Transverse colon (tissue), 4 donors: ENCODE measurements at regions of chr13 and their contacts with region 1.

Region 1: DNA sequence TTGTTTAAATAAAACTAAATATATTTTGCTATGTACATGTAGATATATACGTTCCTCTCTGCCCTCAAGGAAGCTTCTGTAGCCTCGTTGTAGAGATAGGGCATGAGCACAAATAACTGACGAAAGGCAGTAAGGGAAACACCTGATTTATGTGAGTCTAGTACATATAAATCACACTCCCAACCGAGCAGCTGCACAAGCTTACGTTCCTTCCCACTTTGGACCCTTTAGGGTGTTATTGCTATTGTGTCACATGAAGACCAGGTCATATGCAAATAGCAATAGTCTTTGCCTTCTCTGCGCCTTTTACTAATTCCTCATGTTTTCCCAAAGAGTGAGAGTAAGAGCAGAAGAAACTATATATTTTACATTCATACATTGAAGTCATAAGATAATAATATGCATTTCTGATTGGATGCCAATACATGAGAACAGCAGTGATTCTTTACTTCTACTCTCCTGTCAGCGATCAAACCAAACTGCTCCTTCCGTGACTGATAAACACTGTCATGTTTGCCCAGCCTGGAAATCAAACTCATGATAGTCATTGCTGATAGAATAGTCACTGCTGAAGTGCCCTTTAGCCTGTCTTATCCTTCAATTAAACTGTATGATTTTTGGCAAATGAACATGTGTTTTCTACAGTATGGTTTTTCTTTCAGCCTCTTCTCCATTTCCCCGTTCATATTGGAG is 127.2 kb upstream of the MAB21L1 start:
- DNase-seq: no peak
- H3K4me3 ChIP-seq: no peak overlapping the region
- H3K27ac ChIP-seq: no peak overlapping the region
- H3K4me1 ChIP-seq: no peaks in the 10 kb centered on the region
- H3K27me3 ChIP-seq: no peaks in the 10 kb centered on the region
- CTCF ChIP-seq: no peak
- EP300 ChIP-seq: no peak
- POLR2A ChIP-seq: no peak

Region 2: DNA sequence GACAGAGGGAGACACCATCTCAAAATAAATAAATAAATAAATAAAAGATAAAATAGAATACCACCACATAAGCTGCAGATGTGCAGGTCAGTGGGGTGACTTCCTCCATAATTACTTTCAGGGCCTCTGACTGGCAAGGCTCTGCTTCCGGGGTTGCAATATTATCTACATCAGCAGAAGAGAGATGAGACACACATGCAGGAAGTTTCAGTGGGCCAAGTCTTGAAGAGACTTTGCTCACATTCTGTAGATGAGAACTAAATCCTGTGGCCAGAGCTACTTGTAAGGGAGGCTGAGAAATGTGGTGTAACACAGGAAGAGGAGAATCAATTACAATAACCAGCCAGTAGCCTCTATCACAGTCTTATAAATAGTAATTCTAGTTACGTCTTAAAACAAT is 37.4 kb before region 1 on chr13:
- in situ Hi-C with region 1: no loop called
- intact Hi-C with region 1: loop called (anchors 2 kb)
- DNase-seq: no peak
- H3K4me3 ChIP-seq: no peak overlapping the region
- H3K27ac ChIP-seq: no peak overlapping the region
- H3K4me1 ChIP-seq: no peaks in the 10 kb centered on the region
- H3K27me3 ChIP-seq: no peaks in the 10 kb centered on the region
- CTCF ChIP-seq: no peak
- EP300 ChIP-seq: no peak
- POLR2A ChIP-seq: no peak